HepG2 (cell line): ENCODE measurements at regions of chr20 and their contacts with region 1.

Region 1: GRCh38 chr20:25247956-25248785 is at the start of gene PYGB:
- DNase-seq: peak; percentile 78
- ATAC-seq: peak; percentile 77
- H3K4me3 ChIP-seq: peak within 1 kb of the TSS; percentile 69 to 93 (median 93)
- H3K27ac ChIP-seq: peak within 1 kb of the TSS; percentile 75
- H3K4me1 ChIP-seq: peaks cover 55% of the 10 kb centered on the region
- H3K27me3 ChIP-seq: peaks cover 1 to 15% of the 10 kb centered on the region in 2 experiments; a peak in 2 of 5 replicates
- CTCF ChIP-seq: peak; percentile 39; the same call in 1 of the 2 replicates
- EP300 ChIP-seq: 0 out of 4 replicates have a peak, but pooled peaks of 1 of the 2 experiments have one; percentile 45
- POLR2A ChIP-seq: peak; percentile 95 to 100
- RAD21 ChIP-seq: peak; percentile 59
- total RNA-seq, gene PYGB: 82.0 and 86.3 TPM in 2 replicates

Region 2: GRCh38 chr20:25000268-25000821 is 247.8 kb before region 1 on chr20:
- CTCF ChIA-PET with region 1: no interaction called
- POLR2A ChIA-PET with region 1: no interaction called
- in situ Hi-C with region 1: no loop called
- intact Hi-C with region 1: no loop called
- DNase-seq: no peak
- ATAC-seq: no peak; the same call in 2 of the 3 replicates
- H3K4me3 ChIP-seq: no peak overlapping the region
- H3K27ac ChIP-seq: no peak overlapping the region
- H3K4me1 ChIP-seq: no peaks in the 10 kb centered on the region
- H3K27me3 ChIP-seq: peaks cover 1 to 8% of the 10 kb centered on the region in 2 experiments; a peak in 1 of 5 replicates
- CTCF ChIP-seq: no peak
- EP300 ChIP-seq: no peak
- POLR2A ChIP-seq: no peak
- RAD21 ChIP-seq: no peak

Region 3: GRCh38 chr20:25100914-25101313 is 147.3 kb before region 1 on chr20:
- CTCF ChIA-PET with region 1: no interaction called
- POLR2A ChIA-PET with region 1: no interaction called
- in situ Hi-C with region 1: no loop called
- intact Hi-C with region 1: no loop called
- DNase-seq: no peak
- ATAC-seq: no peak
- H3K4me3 ChIP-seq: no peak overlapping the region
- H3K27ac ChIP-seq: no peak overlapping the region
- H3K4me1 ChIP-seq: peaks cover 21% of the 10 kb centered on the region
- H3K27me3 ChIP-seq: peaks cover 0 to 17% of the 10 kb centered on the region in 2 experiments; a peak in 2 of 5 replicates
- CTCF ChIP-seq: no peak
- EP300 ChIP-seq: no peak
- POLR2A ChIP-seq: no peak
- RAD21 ChIP-seq: no peak

Region 4: GRCh38 chr20:25195014-25195961 is 52.9 kb before region 1 on chr20 and contains the start of gene ENTPD6:
- CTCF ChIA-PET with region 1: no interaction called
- POLR2A ChIA-PET with region 1: interaction called, 58 read pairs
- in situ Hi-C with region 1: no loop called
- intact Hi-C with region 1: loop called (anchors 1 kb)
- DNase-seq: peak; percentile 90
- ATAC-seq: peak; percentile 81
- H3K4me3 ChIP-seq: peak within 1 kb of the TSS; percentile 82 to 97 (median 93)
- H3K27ac ChIP-seq: peak within 1 kb of the TSS; percentile 67
- H3K4me1 ChIP-seq: peaks cover 48% of the 10 kb centered on the region
- H3K27me3 ChIP-seq: peaks cover 2 to 8% of the 10 kb centered on the region in 2 experiments; a peak in 1 of 5 replicates
- CTCF ChIP-seq: peak; percentile 71
- EP300 ChIP-seq: no peak
- POLR2A ChIP-seq: peak; percentile 89 to 97
- RAD21 ChIP-seq: peak; percentile 47
- total RNA-seq, gene ENTPD6: 98.4 and 164 TPM in 2 replicates

Region 5: GRCh38 chr20:25223179-25223661 is 25.0 kb before region 1 on chr20:
- CTCF ChIA-PET with region 1: interaction called, 11 read pairs
- POLR2A ChIA-PET with region 1: interaction called, 72 read pairs
- in situ Hi-C with region 1: no loop called
- intact Hi-C with region 1: loop called (anchors 1 kb)
- DNase-seq: peak; percentile 91
- ATAC-seq: peak; percentile 81
- H3K4me3 ChIP-seq: no peak overlapping the region
- H3K27ac ChIP-seq: peak overlapping the region; percentile 54
- H3K4me1 ChIP-seq: peaks cover 48% of the 10 kb centered on the region
- H3K27me3 ChIP-seq: no peaks in the 10 kb centered on the region
- CTCF ChIP-seq: peak; percentile 78
- EP300 ChIP-seq: no peak
- POLR2A ChIP-seq: no peak
- RAD21 ChIP-seq: peak; percentile 60; the same call in 1 of the 2 replicates

Region 6: GRCh38 chr20:25237610-25238318 is 10.4 kb before region 1 on chr20:
- CTCF ChIA-PET with region 1: no interaction called
- POLR2A ChIA-PET with region 1: interaction called, 67 read pairs
- in situ Hi-C with region 1: no loop called
- intact Hi-C with region 1: loop called (anchors 1 kb)
- DNase-seq: peak; percentile 90
- ATAC-seq: peak; percentile 56
- H3K4me3 ChIP-seq: no peak overlapping the region
- H3K27ac ChIP-seq: no peak overlapping the region
- H3K4me1 ChIP-seq: peaks cover 64% of the 10 kb centered on the region
- H3K27me3 ChIP-seq: peaks cover 0 to 26% of the 10 kb centered on the region in 2 experiments; a peak in 4 of 5 replicates
- CTCF ChIP-seq: no peak
- EP300 ChIP-seq: peak in 1 of 2 experiments; percentile 73; a peak in 2 of 4 replicates
- POLR2A ChIP-seq: no peak
- RAD21 ChIP-seq: no peak